ENCODE measurements at regions of chr20 and their contacts with region 1.

Region 1: GRCh38 chr20:22691369-22692118 is 107.2 kb upstream of the FOXA2 start:
- DNase-seq: peak; percentile 58 to 84
- H3K4me3 ChIP-seq: no peak overlapping the region
- H3K27ac ChIP-seq: no peak overlapping the region
- H3K4me1 ChIP-seq: peaks cover 0 to 2% (median 0%) of the 10 kb centered on the region in 4 experiments; a peak in 1 of 7 replicates
- H3K27me3 ChIP-seq: no peaks in the 10 kb centered on the region; a peak in 2 of 7 replicates
- CTCF ChIP-seq: peak; percentile 77 to 90 (median 89)
- EP300 ChIP-seq: no peak
- POLR2A ChIP-seq: no peak
- RAD21 ChIP-seq: peak; percentile 92 to 96

Region 2: DNA sequence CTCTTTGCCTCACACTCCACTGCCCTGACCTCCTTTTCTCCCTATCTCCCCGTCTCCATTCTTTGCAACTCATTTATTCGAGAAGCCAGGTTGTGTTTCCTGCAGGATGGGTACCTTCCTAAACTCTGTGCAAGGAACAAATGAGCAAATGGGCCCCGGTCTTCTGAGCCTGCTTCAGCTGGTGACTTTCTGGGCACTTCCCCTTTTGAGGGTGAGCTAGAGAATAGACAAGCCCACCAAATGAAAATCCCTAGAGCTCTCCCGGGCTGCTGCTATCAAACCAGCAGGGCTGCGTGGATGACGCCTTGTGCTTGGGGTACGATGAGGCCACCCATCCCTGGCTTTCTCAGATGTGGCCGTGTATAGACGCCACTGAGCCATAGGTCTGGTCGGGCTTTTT is 16.2 kb before region 1 on chr20:
- CTCF ChIA-PET with region 1: interaction called, 19 read pairs
- POLR2A ChIA-PET with region 1: no interaction called
- DNase-seq: no peak
- H3K4me3 ChIP-seq: no peak overlapping the region
- H3K27ac ChIP-seq: no peak overlapping the region
- H3K4me1 ChIP-seq: no peaks in the 10 kb centered on the region; a peak in 1 of 7 replicates
- H3K27me3 ChIP-seq: no peaks in the 10 kb centered on the region
- CTCF ChIP-seq: no peak
- EP300 ChIP-seq: no peak
- POLR2A ChIP-seq: no peak
- RAD21 ChIP-seq: no peak

Region 3: DNA sequence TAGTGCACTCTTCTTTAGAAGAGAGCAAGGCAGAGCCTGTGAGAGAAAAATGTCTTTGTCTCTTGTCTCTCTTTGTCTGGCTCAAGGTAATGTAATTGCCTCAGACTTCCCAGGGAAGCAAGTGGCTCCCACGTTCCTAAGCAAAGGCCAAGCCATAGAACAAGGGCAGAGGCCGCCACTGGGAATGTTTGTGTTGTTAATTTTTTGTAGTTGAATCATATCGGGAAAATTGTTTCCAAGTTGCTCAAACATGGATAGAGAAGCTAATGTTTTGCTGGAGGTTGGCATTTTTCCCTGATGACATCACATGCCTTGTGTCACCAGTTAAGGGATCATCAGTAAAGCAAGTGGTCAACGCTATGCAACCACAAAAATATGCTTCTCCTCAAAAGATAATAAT is 104.3 kb after region 1 on chr20:
- CTCF ChIA-PET with region 1: no interaction called
- POLR2A ChIA-PET with region 1: no interaction called
- DNase-seq: no peak
- H3K4me3 ChIP-seq: no peak overlapping the region
- H3K27ac ChIP-seq: no peak overlapping the region
- H3K4me1 ChIP-seq: peaks cover 0 to 8% (median 0%) of the 10 kb centered on the region in 4 experiments; a peak in 2 of 7 replicates
- H3K27me3 ChIP-seq: no peaks in the 10 kb centered on the region
- CTCF ChIP-seq: no peak
- EP300 ChIP-seq: no peak
- POLR2A ChIP-seq: no peak
- RAD21 ChIP-seq: no peak

Region 4: GRCh38 chr20:22904386-22904785 is 212.8 kb after region 1 on chr20:
- CTCF ChIA-PET with region 1: interaction called, 10 read pairs
- POLR2A ChIA-PET with region 1: no interaction called
- DNase-seq: no peak
- H3K4me3 ChIP-seq: no peak overlapping the region
- H3K27ac ChIP-seq: no peak overlapping the region
- H3K4me1 ChIP-seq: no peaks in the 10 kb centered on the region
- H3K27me3 ChIP-seq: no peaks in the 10 kb centered on the region
- CTCF ChIP-seq: no peak
- EP300 ChIP-seq: no peak
- POLR2A ChIP-seq: no peak
- RAD21 ChIP-seq: no peak

Region 5: GRCh38 chr20:23200918-23201317 is 509.4 kb after region 1 on chr20:
- CTCF ChIA-PET with region 1: interaction called, 17 read pairs
- POLR2A ChIA-PET with region 1: no interaction called
- DNase-seq: peak; percentile 34 to 70
- H3K4me3 ChIP-seq: no peak overlapping the region
- H3K27ac ChIP-seq: no peak overlapping the region
- H3K4me1 ChIP-seq: peaks cover 9 to 14% (median 10%) of the 10 kb centered on the region in 4 experiments
- H3K27me3 ChIP-seq: peaks cover 0 to 2% (median 0%) of the 10 kb centered on the region in 4 experiments; a peak in 2 of 7 replicates
- CTCF ChIP-seq: peak; percentile 79 to 84 (median 84)
- EP300 ChIP-seq: peak in 1 of 2 experiments; percentile 28; a peak in 1 of 3 replicates
- POLR2A ChIP-seq: no peak
- RAD21 ChIP-seq: peak; percentile 90 to 93